Endothelial cell of umbilical vein (primary cell): ENCODE measurements at regions of chr12 and their contacts with region 1.

Region 1: DNA sequence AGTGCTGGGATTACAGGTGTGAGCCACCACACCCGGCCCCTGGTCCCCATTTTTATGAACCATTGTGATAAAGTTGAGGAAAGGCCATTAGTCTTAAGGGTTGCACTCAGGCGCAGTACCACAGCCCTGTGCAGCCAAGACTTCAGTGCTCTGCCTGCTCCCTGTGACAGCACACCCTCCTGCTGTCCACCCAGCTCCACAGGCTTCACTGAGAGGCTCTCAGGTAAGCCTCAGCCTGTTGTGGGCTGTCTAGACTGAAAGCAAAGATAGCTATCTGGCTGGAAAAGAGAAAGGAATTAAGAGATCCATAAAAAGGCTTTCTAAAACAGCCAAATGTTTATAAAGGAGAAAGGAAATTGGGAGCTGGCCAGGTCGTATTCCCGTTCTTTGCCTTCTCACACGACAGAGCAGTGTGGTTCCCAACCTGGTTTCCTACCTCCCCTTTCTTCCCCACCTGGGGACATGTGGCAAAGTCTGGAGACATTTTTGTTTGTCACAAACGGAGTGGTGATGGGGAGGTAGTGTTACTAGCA is 19.1 kb upstream of the DNM1L start:
- DNase-seq: peak; percentile 11
- H3K4me3 ChIP-seq: no peak overlapping the region
- H3K27ac ChIP-seq: no peak overlapping the region
- H3K4me1 ChIP-seq: no peaks in the 10 kb centered on the region
- H3K27me3 ChIP-seq: no peaks in the 10 kb centered on the region
- CTCF ChIP-seq: no peak
- POLR2A ChIP-seq: no peak

Region 2: GRCh38 chr12:32198555-32198954 is 461.4 kb before region 1 on chr12:
- CTCF ChIA-PET with region 1: no interaction called
- POLR2A ChIA-PET with region 1: no interaction called
- dilution Hi-C with region 1: no loop called
- intact Hi-C with region 1: no loop called
- DNase-seq: peak; percentile 58
- H3K4me3 ChIP-seq: no peak overlapping the region
- H3K27ac ChIP-seq: peak overlapping the region; percentile 44
- H3K4me1 ChIP-seq: peaks cover 19% of the 10 kb centered on the region
- H3K27me3 ChIP-seq: no peaks in the 10 kb centered on the region
- CTCF ChIP-seq: no peak
- POLR2A ChIP-seq: no peak

Region 3: DNA sequence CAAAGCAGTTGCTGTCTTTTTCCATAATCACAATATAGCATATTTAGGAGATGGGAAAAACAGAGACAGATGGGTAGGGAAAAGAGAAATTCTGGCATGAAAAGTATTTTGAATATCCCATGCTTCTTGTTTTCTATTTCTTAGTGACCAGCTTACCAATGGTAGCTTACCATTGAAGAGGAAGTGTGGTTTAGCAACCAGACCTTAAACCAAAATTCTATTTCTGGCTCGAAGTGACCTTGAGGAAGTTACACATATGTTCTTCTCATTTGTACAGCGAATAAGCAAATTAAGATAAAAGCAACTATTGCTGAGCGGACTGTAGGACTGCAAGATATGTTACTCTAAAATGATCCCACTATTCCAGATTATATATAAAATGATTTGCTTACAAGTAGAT is 177.7 kb before region 1 on chr12:
- CTCF ChIA-PET with region 1: interaction called, 6 read pairs
- POLR2A ChIA-PET with region 1: no interaction called
- dilution Hi-C with region 1: no loop called
- intact Hi-C with region 1: loop called (anchors 10 kb)
- DNase-seq: peak; percentile 71
- H3K4me3 ChIP-seq: no peak overlapping the region
- H3K27ac ChIP-seq: peak overlapping the region; percentile 47
- H3K4me1 ChIP-seq: peaks cover 53% of the 10 kb centered on the region
- H3K27me3 ChIP-seq: no peaks in the 10 kb centered on the region
- CTCF ChIP-seq: no peak
- POLR2A ChIP-seq: no peak